Natural killer cell (primary cell): ENCODE measurements at regions of chr3 and their contacts with region 1.

Region 1: GRCh38 chr3:138781012-138781470 is 53.7 kb downstream of the PIK3CB start:
- DNase-seq: peak in 1 of 2 donors; percentile 85
- ATAC-seq: peak; percentile 93 to 95 (median 94)
- H3K4me3 ChIP-seq: no peak overlapping the region
- H3K4me3 Mint-ChIP-seq: peak overlapping the region; percentile 45
- H3K27ac ChIP-seq: peak overlapping the region; percentile 71
- H3K27ac Mint-ChIP-seq: peak overlapping the region; percentile 33 to 72
- H3K4me1 ChIP-seq: peaks cover 13% of the 10 kb centered on the region
- H3K4me1 Mint-ChIP-seq: peaks cover 7 to 10% of the 10 kb centered on the region in 2 donors
- H3K27me3 ChIP-seq: no peaks in the 10 kb centered on the region
- H3K27me3 Mint-ChIP-seq: no peaks in the 10 kb centered on the region
- CTCF ChIP-seq: no peak

Region 2: GRCh38 chr3:138834359-138835212 is 53.5 kb after region 1 on chr3 and contains the start of gene PIK3CB:
- intact Hi-C with region 1: loop called (anchors 5 kb)
- DNase-seq: peak; percentile 72 to 89
- ATAC-seq: peak; percentile 88 to 94 (median 93)
- H3K4me3 ChIP-seq: peak within 1 kb of the TSS; percentile 67
- H3K4me3 Mint-ChIP-seq: peak within 1 kb of the TSS; percentile 95
- H3K27ac ChIP-seq: peak within 1 kb of the TSS; percentile 60
- H3K27ac Mint-ChIP-seq: peak within 1 kb of the TSS; percentile 81 to 88
- H3K4me1 ChIP-seq: peaks cover 17% of the 10 kb centered on the region
- H3K4me1 Mint-ChIP-seq: peaks cover 18% of the 10 kb centered on the region in 2 donors
- H3K27me3 ChIP-seq: no peaks in the 10 kb centered on the region
- H3K27me3 Mint-ChIP-seq: no peaks in the 10 kb centered on the region
- CTCF ChIP-seq: no peak
- total RNA-seq, gene PIK3CB: 13.2 to 20.2 (median 18.0) TPM

Region 3: DNA sequence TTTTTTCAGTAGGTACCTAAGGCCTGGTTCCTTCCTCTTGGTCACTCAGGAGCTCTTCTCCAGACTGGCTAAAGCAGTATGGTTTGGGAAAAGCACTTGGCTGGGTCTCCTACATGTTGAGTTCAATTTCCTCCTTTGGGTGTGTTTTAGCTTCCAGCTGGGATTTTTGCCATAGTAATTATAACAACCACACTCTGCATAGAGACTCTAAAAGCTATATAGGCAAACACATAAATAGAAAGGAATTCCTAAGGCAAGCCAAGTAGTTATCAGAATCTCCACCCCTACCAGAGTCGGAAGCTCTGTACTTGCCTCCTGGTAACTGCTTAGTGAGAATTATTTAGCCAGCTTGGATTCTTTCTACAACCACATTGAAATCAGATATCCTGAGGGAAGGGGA is 117.3 kb after region 1 on chr3:
- intact Hi-C with region 1: no loop called
- DNase-seq: no peak
- ATAC-seq: no peak
- H3K4me3 ChIP-seq: no peak overlapping the region
- H3K4me3 Mint-ChIP-seq: no peak overlapping the region
- H3K27ac ChIP-seq: no peak overlapping the region
- H3K27ac Mint-ChIP-seq: no peak overlapping the region
- H3K4me1 ChIP-seq: no peaks in the 10 kb centered on the region
- H3K4me1 Mint-ChIP-seq: no peaks in the 10 kb centered on the region
- H3K27me3 ChIP-seq: no peaks in the 10 kb centered on the region
- H3K27me3 Mint-ChIP-seq: peaks cover 0 to 8% of the 10 kb centered on the region in 2 donors
- CTCF ChIP-seq: no peak

Region 4: GRCh38 chr3:140386357-140387100 is 1605.5 kb after region 1 on chr3:
- intact Hi-C with region 1: no loop called
- DNase-seq: no peak
- ATAC-seq: no peak
- H3K4me3 ChIP-seq: no peak overlapping the region
- H3K4me3 Mint-ChIP-seq: no peak overlapping the region
- H3K27ac ChIP-seq: no peak overlapping the region
- H3K27ac Mint-ChIP-seq: no peak overlapping the region
- H3K4me1 ChIP-seq: no peaks in the 10 kb centered on the region
- H3K4me1 Mint-ChIP-seq: no peaks in the 10 kb centered on the region
- H3K27me3 ChIP-seq: no peaks in the 10 kb centered on the region
- H3K27me3 Mint-ChIP-seq: peaks cover 3 to 12% of the 10 kb centered on the region in 2 donors
- CTCF ChIP-seq: no peak